MCF 10A (cell line): ENCODE measurements at regions of chr14 and their contacts with region 1.

Region 1: GRCh38 chr14:51691176-51691575 is 39.5 kb downstream of the FRMD6 start:
- DNase-seq: no peak
- H3K4me3 Mint-ChIP-seq: no peak overlapping the region
- H3K27ac Mint-ChIP-seq: no peak overlapping the region
- H3K4me1 Mint-ChIP-seq: peaks cover 17% of the 10 kb centered on the region
- H3K27me3 Mint-ChIP-seq: no peaks in the 10 kb centered on the region
- CTCF ChIP-seq: no peak

Region 2: DNA sequence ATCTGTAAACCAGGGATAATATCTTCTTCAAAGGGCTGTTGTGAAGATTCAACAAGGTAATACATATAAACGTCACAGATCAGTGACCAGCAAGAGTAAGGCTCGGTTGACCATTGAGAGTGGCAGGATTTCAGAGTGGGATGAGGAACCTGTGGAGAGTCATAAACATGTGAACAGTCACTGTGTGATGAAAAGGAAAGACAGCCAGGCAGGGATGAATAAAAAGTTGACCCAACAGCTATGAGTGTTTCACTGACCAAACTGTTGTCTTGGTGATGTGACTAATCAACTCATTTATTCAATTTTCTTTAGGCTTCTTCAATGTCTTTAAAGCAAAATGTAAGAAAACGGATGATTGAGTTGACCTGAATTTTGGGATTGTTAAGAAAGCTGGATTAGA is 48.0 kb before region 1 on chr14:
- CTCF ChIA-PET with region 1: no interaction called
- POLR2A ChIA-PET with region 1: no interaction called
- intact Hi-C with region 1: no loop called
- DNase-seq: peak; percentile 30
- H3K4me3 Mint-ChIP-seq: no peak overlapping the region
- H3K27ac Mint-ChIP-seq: peak overlapping the region; percentile 79
- H3K4me1 Mint-ChIP-seq: peaks cover 24% of the 10 kb centered on the region
- H3K27me3 Mint-ChIP-seq: no peaks in the 10 kb centered on the region
- CTCF ChIP-seq: no peak

Region 3: GRCh38 chr14:51704545-51704944 is 13.4 kb after region 1 on chr14:
- CTCF ChIA-PET with region 1: interaction called, 4 read pairs
- POLR2A ChIA-PET with region 1: interaction called, 13 read pairs
- intact Hi-C with region 1: no loop called
- DNase-seq: no peak
- H3K4me3 Mint-ChIP-seq: no peak overlapping the region
- H3K27ac Mint-ChIP-seq: peak overlapping the region; percentile 54
- H3K4me1 Mint-ChIP-seq: no peaks in the 10 kb centered on the region
- H3K27me3 Mint-ChIP-seq: no peaks in the 10 kb centered on the region
- CTCF ChIP-seq: no peak